Activated CD8-positive, alpha-beta T cell treated with anti-CD3 and anti-CD28 coated beads, Interleukin-2, amount 10 ng/mL, durations not matched to agents 7 days and 5 days (primary cell): ENCODE measurements at regions of chr18 and their contacts with region 1.

Region 1: GRCh38 chr18:53909668-53910067 is 314.8 kb downstream of the MBD2 start:
- DNase-seq: peak; percentile 51
- ATAC-seq: peak; percentile 36
- H3K4me3 Mint-ChIP-seq: no peak overlapping the region
- H3K27ac Mint-ChIP-seq: no peak overlapping the region
- H3K4me1 Mint-ChIP-seq: no peaks in the 10 kb centered on the region
- H3K27me3 Mint-ChIP-seq: no peaks in the 10 kb centered on the region

Region 2: DNA sequence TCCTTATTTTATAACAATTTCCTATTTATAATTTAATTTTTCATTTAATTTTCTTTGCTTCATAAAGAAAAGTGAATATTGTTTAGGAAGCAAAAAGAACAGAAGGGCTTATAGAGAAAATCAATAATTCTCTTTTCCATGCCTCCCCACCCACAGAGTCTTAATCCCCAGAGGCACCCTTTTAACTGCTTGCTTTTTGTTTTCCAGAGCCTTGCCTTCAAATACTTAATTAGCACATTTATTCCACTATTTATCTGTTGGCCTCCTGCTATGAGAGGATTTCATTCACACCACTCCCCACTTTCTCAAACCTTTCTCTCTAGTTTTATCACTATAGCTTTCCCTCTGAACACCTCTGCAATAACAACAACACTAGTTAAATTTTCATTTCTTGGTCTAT is 58.8 kb before region 1 on chr18:
- CTCF ChIA-PET with region 1: no interaction called
- POLR2A ChIA-PET with region 1: no interaction called
- DNase-seq: no peak
- ATAC-seq: no peak
- H3K4me3 Mint-ChIP-seq: no peak overlapping the region
- H3K27ac Mint-ChIP-seq: no peak overlapping the region
- H3K4me1 Mint-ChIP-seq: no peaks in the 10 kb centered on the region
- H3K27me3 Mint-ChIP-seq: no peaks in the 10 kb centered on the region

Region 3: DNA sequence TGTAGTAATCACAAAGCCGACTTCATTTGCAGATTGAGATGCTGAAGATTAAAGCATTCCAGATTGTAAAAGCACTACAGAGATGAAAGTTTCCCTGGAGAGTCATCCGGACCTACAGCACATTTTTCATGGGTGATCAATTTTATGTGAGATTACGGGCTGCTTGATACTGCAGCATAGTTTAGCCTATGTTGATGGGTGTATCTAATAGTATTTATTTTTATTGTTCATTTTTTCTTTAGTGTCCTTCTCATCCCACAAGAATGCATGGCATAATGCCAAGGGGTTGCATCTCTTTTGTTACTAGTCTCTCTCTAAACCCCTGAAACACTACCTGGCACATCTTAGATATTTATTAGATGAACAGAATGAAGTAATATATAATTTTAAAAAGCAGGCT is 74.4 kb after region 1 on chr18:
- CTCF ChIA-PET with region 1: no interaction called
- POLR2A ChIA-PET with region 1: no interaction called
- DNase-seq: no peak
- ATAC-seq: no peak
- H3K4me3 Mint-ChIP-seq: no peak overlapping the region
- H3K27ac Mint-ChIP-seq: no peak overlapping the region
- H3K4me1 Mint-ChIP-seq: no peaks in the 10 kb centered on the region
- H3K27me3 Mint-ChIP-seq: no peaks in the 10 kb centered on the region

Region 4: DNA sequence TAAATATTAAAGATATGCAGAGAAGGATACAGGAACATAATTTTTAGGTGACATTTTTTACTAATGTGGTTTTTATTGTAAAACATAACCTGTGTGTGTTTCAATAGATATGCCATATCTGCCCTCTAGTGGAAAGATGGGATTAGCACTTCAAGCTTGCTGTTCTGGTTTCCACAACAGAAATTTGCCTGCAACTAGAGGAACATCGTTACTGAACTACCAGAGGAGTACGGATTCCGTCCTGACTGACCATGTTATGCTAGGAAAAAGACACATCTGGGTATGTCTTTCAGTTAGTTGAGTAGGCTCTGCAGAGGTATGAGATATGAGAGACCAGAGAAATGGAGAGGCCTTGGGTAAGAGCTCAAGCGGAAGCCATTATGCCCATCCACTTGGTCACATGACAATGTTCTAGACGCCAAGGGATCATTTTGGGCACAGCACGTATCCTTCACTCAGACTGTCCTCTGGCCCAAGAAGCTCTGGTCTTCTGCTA is 209.9 kb after region 1 on chr18:
- CTCF ChIA-PET with region 1: interaction called, 34 read pairs
- POLR2A ChIA-PET with region 1: no interaction called
- DNase-seq: peak; percentile 49
- ATAC-seq: peak; percentile 78
- H3K4me3 Mint-ChIP-seq: peak overlapping the region; percentile 21
- H3K27ac Mint-ChIP-seq: peak overlapping the region; percentile 45
- H3K4me1 Mint-ChIP-seq: peaks cover 3% of the 10 kb centered on the region
- H3K27me3 Mint-ChIP-seq: peaks cover 14% of the 10 kb centered on the region

Region 5: DNA sequence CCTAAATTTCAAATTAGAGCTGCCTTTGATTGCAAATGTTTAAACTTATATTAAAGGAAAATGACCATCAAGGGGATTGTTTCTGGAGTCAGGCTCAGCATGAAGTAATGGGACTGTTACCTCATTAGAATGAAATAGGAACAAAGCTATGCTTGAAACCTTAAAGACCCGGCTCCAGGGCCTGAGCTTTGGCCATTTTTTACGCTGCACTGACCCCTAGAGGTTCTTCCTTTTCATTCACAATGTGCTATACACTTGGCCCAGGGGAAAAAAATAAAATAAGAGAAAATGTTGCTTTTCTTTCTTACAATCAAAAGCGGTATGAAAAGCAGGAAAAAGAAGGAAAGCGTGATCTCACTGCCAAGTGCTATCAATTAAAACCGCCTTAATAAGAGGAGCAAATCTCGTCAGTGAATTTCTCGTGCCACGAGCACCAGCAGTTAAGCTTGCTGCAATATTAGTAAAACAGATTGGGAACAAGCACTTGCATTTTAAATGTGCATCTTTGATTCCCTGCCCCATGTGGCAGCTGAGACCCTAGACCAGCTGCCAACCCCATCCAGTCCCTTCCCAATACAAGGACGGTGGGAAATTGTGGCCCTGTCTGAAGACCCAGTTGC is 218.2 kb after region 1 on chr18:
- CTCF ChIA-PET with region 1: interaction called, 13 read pairs
- POLR2A ChIA-PET with region 1: no interaction called
- DNase-seq: peak; percentile 55
- ATAC-seq: no peak
- H3K4me3 Mint-ChIP-seq: no peak overlapping the region
- H3K27ac Mint-ChIP-seq: no peak overlapping the region
- H3K4me1 Mint-ChIP-seq: peaks cover 10% of the 10 kb centered on the region
- H3K27me3 Mint-ChIP-seq: no peaks in the 10 kb centered on the region